ENCODE measurements at regions of chr12 and their contacts with region 1.

Region 1: DNA sequence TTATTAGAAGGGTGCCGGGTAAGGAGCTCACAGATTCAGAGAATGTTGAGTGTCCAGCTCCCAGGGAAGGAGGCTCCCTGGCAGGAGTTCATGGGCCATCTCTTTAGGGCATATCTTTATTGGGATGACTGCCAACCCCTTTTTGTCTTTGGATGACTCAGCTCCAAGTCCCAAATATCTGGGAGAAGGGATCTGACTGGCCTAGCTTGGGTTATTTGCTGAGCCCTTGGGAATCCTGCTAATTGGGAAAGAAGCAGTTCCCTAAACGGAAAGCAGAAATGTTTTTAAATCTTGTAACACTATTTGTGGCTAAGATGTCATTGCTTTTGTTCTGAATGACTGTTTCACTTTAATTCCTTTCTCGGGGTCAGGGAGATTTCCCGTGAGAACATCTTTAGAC is 12.6 kb downstream of the DDX55 start:
- DNase-seq: no peak
- ATAC-seq: no peak
- H3K4me3 ChIP-seq: no peak overlapping the region
- H3K4me3 Mint-ChIP-seq: no peak overlapping the region
- H3K27ac ChIP-seq: no peak overlapping the region
- H3K27ac Mint-ChIP-seq: peak overlapping the region in 1 of 9 donors; percentile 36
- H3K4me1 ChIP-seq: peaks cover 0 to 4% of the 10 kb centered on the region in 2 donors
- H3K4me1 Mint-ChIP-seq: peaks cover 0 to 10% (median 4%) of the 10 kb centered on the region in 7 donors
- H3K27me3 ChIP-seq: no peaks in the 10 kb centered on the region
- H3K27me3 Mint-ChIP-seq: no peaks in the 10 kb centered on the region

Region 2: DNA sequence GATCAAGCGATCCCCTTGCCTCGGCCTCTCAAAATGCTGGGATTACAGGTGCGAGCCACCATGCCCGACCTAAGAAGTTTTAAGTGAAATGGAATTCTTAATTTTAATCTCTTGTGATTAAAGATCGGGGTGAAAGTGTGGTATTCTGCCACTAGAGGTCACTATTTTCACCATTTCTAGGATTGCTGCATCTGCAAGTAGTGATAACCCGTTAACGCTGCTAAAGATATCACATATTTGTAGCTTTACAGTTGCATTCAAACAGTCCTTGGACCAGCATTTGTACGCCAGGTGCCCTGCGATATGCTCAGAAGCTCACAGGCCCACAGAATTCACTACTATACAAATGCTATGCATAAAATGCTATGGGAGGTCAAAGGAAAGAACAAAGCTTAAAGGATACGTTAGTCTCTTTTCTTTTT is 820.8 kb before region 1 on chr12:
- CTCF ChIA-PET with region 1: no interaction called
- POLR2A ChIA-PET with region 1: no interaction called
- intact Hi-C with region 1: loop called in 1 of 2 experiments (anchors 1 kb)
- DNase-seq: peak in 7 of 9 donors; percentile 35 to 72 (median 62)
- ATAC-seq: peak; percentile 82
- H3K4me3 ChIP-seq: no peak overlapping the region
- H3K4me3 Mint-ChIP-seq: no peak overlapping the region
- H3K27ac ChIP-seq: no peak overlapping the region
- H3K27ac Mint-ChIP-seq: no peak overlapping the region
- H3K4me1 ChIP-seq: no peaks in the 10 kb centered on the region
- H3K4me1 Mint-ChIP-seq: peaks cover 0 to 3% (median 0%) of the 10 kb centered on the region in 7 donors
- H3K27me3 ChIP-seq: no peaks in the 10 kb centered on the region
- H3K27me3 Mint-ChIP-seq: no peaks in the 10 kb centered on the region

Region 3: GRCh38 chr12:123271001-123271729 is 343.4 kb before region 1 on chr12:
- CTCF ChIA-PET with region 1: no interaction called
- POLR2A ChIA-PET with region 1: no interaction called
- intact Hi-C with region 1: loop called in 1 of 2 experiments (anchors 1 kb)
- DNase-seq: peak; percentile 55 to 84 (median 68)
- ATAC-seq: peak; percentile 88
- H3K4me3 ChIP-seq: no peak overlapping the region
- H3K4me3 Mint-ChIP-seq: peak overlapping the region in 1 of 10 donors; percentile 87
- H3K27ac ChIP-seq: no peak overlapping the region
- H3K27ac Mint-ChIP-seq: no peak overlapping the region
- H3K4me1 ChIP-seq: peaks cover 12 to 18% of the 10 kb centered on the region in 2 donors
- H3K4me1 Mint-ChIP-seq: peaks cover 7 to 30% (median 20%) of the 10 kb centered on the region in 7 donors
- H3K27me3 ChIP-seq: no peaks in the 10 kb centered on the region
- H3K27me3 Mint-ChIP-seq: no peaks in the 10 kb centered on the region

Region 4: GRCh38 chr12:123601602-123602489 is 12.7 kb before region 1 on chr12 and contains the start of gene DDX55:
- CTCF ChIA-PET with region 1: interaction called, 3 read pairs
- POLR2A ChIA-PET with region 1: interaction called, 12 read pairs
- intact Hi-C with region 1: no loop called
- DNase-seq: peak; percentile 77 to 87 (median 86)
- ATAC-seq: peak; percentile 96
- H3K4me3 ChIP-seq: peak within 1 kb of the TSS; percentile 99
- H3K4me3 Mint-ChIP-seq: peak within 1 kb of the TSS; percentile 89 to 99 (median 97)
- H3K27ac ChIP-seq: peak within 1 kb of the TSS; percentile 84
- H3K27ac Mint-ChIP-seq: peak within 1 kb of the TSS; percentile 83 to 98 (median 93)
- H3K4me1 ChIP-seq: peaks cover 4 to 8% of the 10 kb centered on the region in 2 donors
- H3K4me1 Mint-ChIP-seq: peaks cover 11 to 47% (median 30%) of the 10 kb centered on the region in 7 donors
- H3K27me3 ChIP-seq: no peaks in the 10 kb centered on the region
- H3K27me3 Mint-ChIP-seq: no peaks in the 10 kb centered on the region
- total RNA-seq, gene DDX55: 26.0 to 54.0 (median 43.4) TPM

Region 5: DNA sequence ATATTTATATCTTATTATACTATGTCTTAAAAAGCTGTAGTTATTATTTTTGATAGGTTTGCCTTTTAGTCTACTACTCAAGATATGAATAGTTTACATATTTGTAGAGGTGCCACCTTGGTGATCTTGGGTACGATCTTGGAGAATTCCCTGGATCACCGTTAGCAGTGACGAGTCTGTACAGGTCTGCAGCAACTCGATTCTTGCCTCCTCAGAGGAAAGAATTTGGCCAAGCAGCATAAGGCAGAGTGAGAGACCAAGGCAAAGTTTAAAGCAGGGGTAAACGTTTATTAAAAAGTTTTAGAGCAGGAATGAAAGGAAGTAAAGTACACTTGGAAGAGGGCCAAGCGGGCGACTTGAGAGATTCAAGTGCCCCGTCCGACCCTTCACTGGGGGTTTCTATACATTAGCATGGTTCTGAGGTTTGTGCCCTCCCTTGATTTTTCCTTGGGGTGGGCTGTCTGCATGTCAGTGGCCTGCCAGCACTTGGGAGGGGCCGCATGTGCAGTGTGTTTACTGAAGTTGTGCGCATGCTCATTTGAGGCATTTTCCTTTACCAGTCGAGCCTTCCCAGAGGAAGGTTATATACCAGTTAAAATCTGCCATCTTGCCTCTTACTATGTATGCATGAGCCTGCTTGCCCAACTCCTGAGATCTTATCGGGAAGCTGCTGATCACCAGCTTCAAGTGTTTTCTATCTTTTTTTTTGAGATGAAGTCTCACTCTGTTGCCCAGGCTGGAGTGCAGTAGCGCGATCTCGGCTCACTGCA is 53.4 kb after region 1 on chr12:
- CTCF ChIA-PET with region 1: no interaction called
- POLR2A ChIA-PET with region 1: no interaction called
- intact Hi-C with region 1: no loop called
- DNase-seq: no peak
- ATAC-seq: no peak
- H3K4me3 ChIP-seq: no peak overlapping the region
- H3K4me3 Mint-ChIP-seq: no peak overlapping the region
- H3K27ac ChIP-seq: no peak overlapping the region
- H3K27ac Mint-ChIP-seq: no peak overlapping the region
- H3K4me1 ChIP-seq: peaks cover 3 to 10% of the 10 kb centered on the region in 2 donors
- H3K4me1 Mint-ChIP-seq: peaks cover 3 to 17% (median 11%) of the 10 kb centered on the region in 7 donors
- H3K27me3 ChIP-seq: no peaks in the 10 kb centered on the region
- H3K27me3 Mint-ChIP-seq: no peaks in the 10 kb centered on the region

Measured in naive thymus-derived CD4-positive, alpha-beta T cell (primary cell).